ENCODE measurements at regions of chr3 and their contacts with region 1.

Region 1: DNA sequence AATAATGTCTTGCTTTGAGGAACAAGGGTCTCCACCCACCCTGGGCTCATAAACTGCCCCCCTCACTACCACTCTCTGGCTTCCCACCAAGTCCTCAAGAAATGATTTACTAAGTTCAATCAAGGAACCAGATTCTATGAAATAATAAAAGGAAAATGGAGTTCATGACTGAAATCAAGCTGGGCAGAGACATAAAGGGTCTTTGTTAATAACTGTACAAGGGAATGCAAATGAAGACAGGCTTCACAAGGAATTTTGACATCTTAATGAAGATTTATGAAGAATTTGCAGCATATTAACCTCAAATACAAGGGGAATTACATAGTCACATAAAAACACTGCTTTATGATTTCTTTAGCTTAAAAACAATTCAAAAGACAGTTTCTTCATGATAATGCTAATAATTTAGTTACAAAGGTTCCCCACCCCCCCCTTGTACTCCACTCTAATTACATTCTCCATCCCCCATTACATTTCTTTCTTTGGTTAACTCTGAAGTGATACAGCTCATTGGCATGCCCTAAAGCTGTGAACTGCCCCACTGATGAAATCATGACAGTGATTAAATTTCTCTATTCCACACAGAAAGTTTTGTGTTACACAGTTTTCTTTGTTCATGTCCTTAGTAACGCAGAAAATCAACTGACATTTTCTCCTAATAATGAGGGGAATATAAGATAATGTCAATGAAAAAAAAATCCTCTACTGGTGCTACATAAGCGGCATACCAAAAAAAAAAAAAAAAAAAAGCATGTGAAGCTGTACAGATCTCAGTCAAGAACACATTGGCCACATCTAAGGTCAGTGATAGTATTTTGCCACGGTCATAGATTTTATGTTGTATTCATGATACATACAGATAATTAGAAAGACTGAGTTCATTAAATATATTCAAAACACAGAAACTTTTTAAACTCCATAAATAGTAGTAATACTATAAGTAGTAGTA is 54.4 kb downstream of the WWTR1 start:
- DNase-seq: no peak
- CTCF ChIP-seq: no peak

Region 2: GRCh38 chr3:149547938-149548668 is 55.3 kb before region 1 on chr3:
- CTCF ChIA-PET with region 1: no interaction called
- POLR2A ChIA-PET with region 1: no interaction called
- DNase-seq: no peak
- CTCF ChIP-seq: no peak

Region 3: DNA sequence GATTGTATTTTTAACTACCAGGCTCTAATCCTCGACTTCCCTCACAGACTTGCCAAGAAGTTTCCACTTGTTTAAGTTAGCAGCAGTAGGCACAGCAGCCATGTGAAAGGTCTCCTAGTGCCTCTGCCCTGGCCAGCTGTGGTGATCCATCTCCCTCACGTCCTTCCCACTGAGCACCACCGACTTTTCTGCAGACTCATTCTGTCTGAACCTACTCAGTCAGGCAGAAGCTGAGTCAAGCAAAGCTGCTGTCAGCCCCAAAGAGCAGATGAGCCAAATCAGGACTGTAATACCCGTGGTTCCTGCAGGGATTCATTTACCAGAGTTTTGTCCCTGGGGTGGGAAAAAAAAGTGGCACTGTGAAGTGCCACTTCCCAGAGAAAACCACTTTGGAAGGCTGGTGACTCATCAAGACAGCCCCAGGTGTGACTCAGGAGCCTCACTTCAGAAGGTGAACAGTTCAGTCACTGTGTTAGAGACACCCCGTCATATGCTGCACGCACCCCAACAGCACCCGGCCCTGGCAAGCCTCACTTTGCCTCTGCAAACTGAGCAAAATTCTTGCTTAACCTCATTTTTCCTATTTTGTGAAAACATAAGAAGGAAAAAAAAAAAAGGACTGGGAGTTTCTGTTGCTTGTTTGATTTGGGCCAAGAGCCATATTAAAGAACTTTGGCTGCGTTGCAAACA is 21.6 kb before region 1 on chr3:
- CTCF ChIA-PET with region 1: interaction called, 24 read pairs
- POLR2A ChIA-PET with region 1: no interaction called
- DNase-seq: no peak
- CTCF ChIP-seq: no peak

Region 4: DNA sequence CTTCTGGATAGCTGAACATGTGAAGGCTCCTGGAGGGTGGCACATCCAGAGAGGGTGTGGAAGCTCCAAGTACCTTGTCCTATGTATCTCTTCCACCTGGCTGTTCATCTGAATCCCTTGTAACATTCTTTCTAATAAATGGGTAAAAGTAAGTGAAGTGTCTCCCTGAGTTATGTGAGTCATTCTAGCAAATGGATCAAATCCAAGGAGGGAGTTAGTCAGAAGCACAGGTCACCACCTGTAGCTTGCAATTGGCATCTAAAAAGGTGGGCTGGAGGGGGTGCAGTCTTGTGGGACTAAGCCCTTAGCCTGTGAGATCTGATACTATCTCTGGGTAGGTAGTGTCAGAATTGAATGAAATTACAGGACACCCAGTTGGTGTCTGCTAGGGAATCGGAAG is 16.5 kb before region 1 on chr3:
- CTCF ChIA-PET with region 1: interaction called, 24 read pairs
- POLR2A ChIA-PET with region 1: no interaction called
- DNase-seq: no peak
- CTCF ChIP-seq: no peak

Measured in GM10248 (cell line).